Esophagus squamous epithelium (tissue), 5 donors: ENCODE measurements at regions of chr15 and their contacts with region 1.

Region 1: GRCh38 chr15:89430530-89431341 is 65.6 kb downstream of the RHCG start:
- DNase-seq: no peak
- H3K4me3 ChIP-seq: peak overlapping the region; percentile 10 to 66 (median 36)
- H3K27ac ChIP-seq: no peak overlapping the region
- H3K4me1 ChIP-seq: peaks cover 0 to 14% (median 7%) of the 10 kb centered on the region in 3 donors
- H3K27me3 ChIP-seq: peaks cover 0 to 94% (median 0%) of the 10 kb centered on the region in 4 donors
- CTCF ChIP-seq: peak; percentile 96 to 100 (median 98)
- POLR2A ChIP-seq: no peak

Region 2: DNA sequence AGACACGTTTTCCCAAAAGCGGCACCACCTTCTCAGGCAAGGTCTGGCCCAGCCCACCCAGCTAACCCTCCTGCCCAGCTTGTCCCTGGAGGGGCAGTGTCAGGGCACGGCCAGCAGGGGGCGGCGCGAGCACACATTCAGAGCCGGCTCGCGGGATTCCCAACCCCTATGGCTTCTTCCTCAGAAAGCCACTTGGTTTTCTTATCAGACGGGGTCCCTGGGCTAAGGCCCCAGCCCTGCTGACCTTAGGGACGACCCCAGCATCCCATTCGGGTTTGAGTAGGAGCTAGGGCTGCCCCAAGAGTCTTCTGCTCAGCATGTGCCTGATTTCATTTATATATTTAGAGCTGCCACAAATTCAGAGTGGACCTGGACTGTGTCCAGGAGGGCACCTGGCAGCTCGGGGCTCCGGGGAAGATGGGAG is 223.8 kb before region 1 on chr15:
- intact Hi-C with region 1: loop called (anchors 10 kb)
- DNase-seq: peak; percentile 9
- H3K4me3 ChIP-seq: peak overlapping the region in 1 of 4 donors; percentile 51
- H3K27ac ChIP-seq: no peak overlapping the region
- H3K4me1 ChIP-seq: peaks cover 0 to 9% (median 6%) of the 10 kb centered on the region in 3 donors
- H3K27me3 ChIP-seq: no peaks in the 10 kb centered on the region
- CTCF ChIP-seq: peak; percentile 91 to 99 (median 94)
- POLR2A ChIP-seq: no peak

Region 3: GRCh38 chr15:89358755-89359439 is 71.8 kb before region 1 on chr15:
- intact Hi-C with region 1: loop called (anchors 2 kb)
- DNase-seq: peak; percentile 11
- H3K4me3 ChIP-seq: peak overlapping the region; percentile 15 to 67 (median 44)
- H3K27ac ChIP-seq: no peak overlapping the region
- H3K4me1 ChIP-seq: peaks cover 10 to 41% (median 13%) of the 10 kb centered on the region in 3 donors
- H3K27me3 ChIP-seq: peaks cover 36 to 100% (median 52%) of the 10 kb centered on the region in 4 donors
- CTCF ChIP-seq: peak; percentile 98 to 99 (median 99)
- POLR2A ChIP-seq: no peak